Activated CD8-positive, alpha-beta memory T cell treated with anti-CD3 and anti-CD28 coated beads, Interleukin-2, amount 10 ng/mL, durations not matched to agents 7 days and 5 days (primary cell): ENCODE measurements at regions of chr7 and their contacts with region 1.

Region 1: GRCh38 chr7:135575296-135575695 is 17.6 kb downstream of the NUP205 start:
- DNase-seq: peak; percentile 44
- ATAC-seq: peak; percentile 78
- H3K4me3 Mint-ChIP-seq: no peak overlapping the region
- H3K27ac Mint-ChIP-seq: peak overlapping the region; percentile 85
- H3K4me1 Mint-ChIP-seq: peaks cover 29% of the 10 kb centered on the region
- H3K27me3 Mint-ChIP-seq: no peaks in the 10 kb centered on the region

Region 2: DNA sequence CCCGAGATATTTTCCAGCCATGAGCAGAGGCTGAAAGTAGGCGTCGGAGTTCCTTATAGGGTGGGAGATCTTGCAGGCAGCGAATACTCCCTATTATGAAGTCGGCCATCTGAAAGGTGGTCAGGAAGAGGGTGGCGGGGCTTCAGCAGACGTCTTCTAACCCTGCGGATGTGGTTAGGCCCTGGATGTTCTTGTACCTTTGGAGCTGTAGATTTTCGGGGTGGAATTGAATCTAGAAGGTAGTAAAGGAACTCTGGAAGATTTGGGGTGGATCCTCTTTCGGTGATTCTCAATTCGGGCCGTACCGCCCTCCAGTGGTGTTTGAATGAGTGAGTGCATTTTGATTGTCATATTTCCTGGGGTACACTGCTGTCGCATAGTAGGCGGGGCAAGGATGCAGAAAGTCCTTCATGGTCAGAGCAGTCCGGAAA is 16.9 kb before region 1 on chr7:
- CTCF ChIA-PET with region 1: interaction called, 11 read pairs
- DNase-seq: peak; percentile 84
- ATAC-seq: peak; percentile 81
- H3K4me3 Mint-ChIP-seq: no peak overlapping the region
- H3K27ac Mint-ChIP-seq: no peak overlapping the region
- H3K4me1 Mint-ChIP-seq: peaks cover 22% of the 10 kb centered on the region
- H3K27me3 Mint-ChIP-seq: peaks cover 4% of the 10 kb centered on the region

Region 3: DNA sequence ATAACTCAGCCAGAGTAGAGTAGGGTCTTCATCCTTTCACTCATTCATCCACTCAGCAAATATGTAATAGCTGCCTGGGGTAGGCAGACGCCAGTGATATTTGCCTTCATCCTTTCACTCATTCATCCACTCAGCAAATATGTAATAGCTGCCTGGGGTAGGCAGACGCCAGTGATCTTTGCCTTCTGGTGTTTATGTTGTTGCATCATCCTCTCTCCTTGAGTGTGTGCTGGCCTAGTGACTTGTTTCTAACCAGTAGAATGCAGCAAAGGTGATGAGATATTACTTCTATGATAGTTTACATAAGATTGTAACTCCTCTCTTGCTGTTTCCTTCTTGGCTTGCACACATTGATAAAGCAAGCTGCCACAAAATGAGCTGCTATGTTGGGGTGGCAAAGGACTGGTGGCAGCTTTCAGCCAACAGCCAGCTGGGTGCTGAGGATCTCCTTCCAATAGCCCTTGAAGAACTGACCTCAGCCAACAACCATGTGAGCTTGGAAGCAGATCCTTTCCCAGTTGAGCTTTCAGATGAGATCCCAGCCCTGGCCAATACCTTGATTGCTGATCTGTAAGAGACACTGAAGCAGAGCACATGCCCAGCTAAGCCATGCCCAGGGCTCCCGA is 425.1 kb after region 1 on chr7:
- CTCF ChIA-PET with region 1: no interaction called
- DNase-seq: no peak
- ATAC-seq: no peak
- H3K4me3 Mint-ChIP-seq: no peak overlapping the region
- H3K27ac Mint-ChIP-seq: no peak overlapping the region
- H3K4me1 Mint-ChIP-seq: no peaks in the 10 kb centered on the region
- H3K27me3 Mint-ChIP-seq: no peaks in the 10 kb centered on the region